ENCODE measurements at regions of chr15 and their contacts with region 1.

Region 1: DNA sequence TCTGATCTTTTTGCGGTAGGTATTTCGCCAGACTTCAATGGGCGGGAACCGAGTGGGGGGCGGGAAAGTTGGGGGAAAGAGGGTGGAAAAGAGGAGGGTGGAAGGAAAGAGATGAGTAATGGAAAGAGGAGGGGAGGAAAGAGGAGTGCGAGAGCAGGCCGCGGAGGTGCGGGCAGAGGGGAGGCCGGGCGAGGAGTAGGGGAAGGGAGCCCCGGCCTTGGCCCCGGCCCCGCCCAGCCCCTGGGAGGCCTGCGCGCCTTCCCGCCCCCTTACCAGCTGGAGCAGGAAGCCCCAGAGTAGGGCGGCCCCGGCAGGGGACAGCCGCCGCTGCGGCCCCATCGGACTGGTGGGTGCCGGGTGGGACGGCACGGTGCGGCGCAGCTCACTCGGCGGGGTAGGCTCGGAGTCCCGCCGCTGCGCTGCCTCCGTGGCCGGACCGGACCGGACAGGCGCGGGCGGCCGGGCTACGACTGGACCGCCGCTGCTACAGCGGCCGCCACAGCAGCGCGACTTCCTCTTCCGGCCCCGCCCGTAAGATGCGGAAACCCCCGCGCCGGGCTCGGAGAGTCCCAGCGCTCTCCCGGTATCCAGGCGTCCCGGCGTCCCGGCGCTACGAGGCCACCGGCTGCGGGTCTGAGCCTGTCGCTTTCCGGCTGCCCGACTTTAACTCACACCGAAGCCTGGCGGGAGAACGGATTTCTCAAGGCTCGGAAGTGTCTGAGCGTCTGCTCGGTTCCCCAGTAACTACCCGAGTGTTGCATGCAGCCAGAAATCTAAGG is at the start of gene SPPL2A:
- DNase-seq: peak; percentile 93
- H3K4me3 Mint-ChIP-seq: peak within 1 kb of the TSS; percentile 90
- H3K27ac Mint-ChIP-seq: peak within 1 kb of the TSS; percentile 99
- H3K4me1 Mint-ChIP-seq: peaks cover 55% of the 10 kb centered on the region
- H3K27me3 Mint-ChIP-seq: no peaks in the 10 kb centered on the region
- total RNA-seq, gene SPPL2A: 37.7 to 41.6 TPM

Region 2: GRCh38 chr15:49155110-49155833 is 1610.1 kb before region 1 on chr15 and contains the start of gene COPS2:
- CTCF ChIA-PET with region 1: no interaction called
- intact Hi-C with region 1: loop called (anchors 10 kb)
- DNase-seq: peak; percentile 97
- H3K4me3 Mint-ChIP-seq: peak within 1 kb of the TSS; percentile 98
- H3K27ac Mint-ChIP-seq: peak within 1 kb of the TSS; percentile 97
- H3K4me1 Mint-ChIP-seq: peaks cover 41% of the 10 kb centered on the region
- H3K27me3 Mint-ChIP-seq: no peaks in the 10 kb centered on the region
- total RNA-seq, gene COPS2: 79.7 to 86.4 TPM

Region 3: DNA sequence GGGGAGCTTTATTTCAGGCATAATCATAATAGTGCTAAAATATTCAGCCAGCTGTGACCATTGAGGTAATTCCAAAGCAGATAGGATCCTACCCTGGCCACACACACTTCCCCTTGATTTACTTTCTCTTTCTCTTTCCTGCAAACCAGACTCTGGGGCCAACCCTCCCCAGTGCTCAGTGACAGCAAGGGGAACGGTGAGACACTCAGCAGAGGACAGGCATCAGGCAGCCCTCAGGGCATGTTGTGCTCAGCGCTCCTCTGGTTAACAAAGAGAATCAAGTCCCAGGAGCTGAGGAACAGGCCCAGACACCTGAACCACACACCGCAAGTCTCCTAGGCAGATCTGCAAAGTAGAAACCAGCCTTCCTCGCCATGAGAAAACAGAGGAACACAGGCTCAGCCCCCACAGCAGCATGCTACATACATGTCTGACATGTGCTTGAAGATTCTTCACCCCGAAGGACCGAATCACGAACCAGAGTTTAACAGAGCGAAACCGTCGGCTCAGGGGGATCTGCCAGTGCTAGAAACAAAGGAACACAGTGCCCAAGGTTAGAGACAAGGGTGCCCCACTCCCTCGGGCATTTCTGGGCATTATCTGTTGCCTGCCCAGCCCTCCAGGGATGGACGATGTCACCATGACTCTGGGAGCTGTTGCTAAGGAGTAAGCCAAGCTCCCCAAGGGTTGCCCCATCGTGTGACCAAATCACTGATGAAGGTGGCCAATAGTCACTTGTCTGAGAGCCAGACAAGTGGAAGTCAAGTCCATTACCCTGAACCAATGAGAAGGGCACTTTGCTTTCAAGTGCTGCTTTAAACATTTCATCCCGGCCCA is 517.3 kb before region 1 on chr15:
- CTCF ChIA-PET with region 1: no interaction called
- intact Hi-C with region 1: loop called (anchors 2 kb)
- DNase-seq: peak; percentile 88
- H3K4me3 Mint-ChIP-seq: peak overlapping the region; percentile 81
- H3K27ac Mint-ChIP-seq: peak overlapping the region; percentile 99
- H3K4me1 Mint-ChIP-seq: peaks cover 42% of the 10 kb centered on the region
- H3K27me3 Mint-ChIP-seq: no peaks in the 10 kb centered on the region

Region 4: DNA sequence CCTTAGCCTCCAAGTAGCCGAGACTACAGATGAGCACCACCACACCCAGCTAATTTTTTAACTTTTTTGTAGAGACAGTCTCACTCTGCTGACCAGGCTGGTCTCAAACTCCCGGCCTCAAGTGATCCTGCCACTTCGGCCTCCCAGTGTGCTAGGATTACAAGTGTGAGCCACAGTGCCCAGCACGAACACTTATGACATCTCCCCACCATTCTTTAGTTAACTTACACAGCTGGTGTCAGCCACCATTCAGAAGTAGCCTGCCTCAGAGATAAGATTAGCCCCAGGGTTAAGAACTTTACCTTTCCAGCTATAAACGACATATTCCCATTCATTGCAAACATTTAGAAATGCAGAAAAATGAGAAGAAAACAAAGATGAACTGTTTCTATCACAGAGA is 137.0 kb before region 1 on chr15:
- CTCF ChIA-PET with region 1: no interaction called
- intact Hi-C with region 1: no loop called
- DNase-seq: no peak
- H3K4me3 Mint-ChIP-seq: no peak overlapping the region
- H3K27ac Mint-ChIP-seq: no peak overlapping the region
- H3K4me1 Mint-ChIP-seq: peaks cover 14% of the 10 kb centered on the region
- H3K27me3 Mint-ChIP-seq: no peaks in the 10 kb centered on the region

Region 5: DNA sequence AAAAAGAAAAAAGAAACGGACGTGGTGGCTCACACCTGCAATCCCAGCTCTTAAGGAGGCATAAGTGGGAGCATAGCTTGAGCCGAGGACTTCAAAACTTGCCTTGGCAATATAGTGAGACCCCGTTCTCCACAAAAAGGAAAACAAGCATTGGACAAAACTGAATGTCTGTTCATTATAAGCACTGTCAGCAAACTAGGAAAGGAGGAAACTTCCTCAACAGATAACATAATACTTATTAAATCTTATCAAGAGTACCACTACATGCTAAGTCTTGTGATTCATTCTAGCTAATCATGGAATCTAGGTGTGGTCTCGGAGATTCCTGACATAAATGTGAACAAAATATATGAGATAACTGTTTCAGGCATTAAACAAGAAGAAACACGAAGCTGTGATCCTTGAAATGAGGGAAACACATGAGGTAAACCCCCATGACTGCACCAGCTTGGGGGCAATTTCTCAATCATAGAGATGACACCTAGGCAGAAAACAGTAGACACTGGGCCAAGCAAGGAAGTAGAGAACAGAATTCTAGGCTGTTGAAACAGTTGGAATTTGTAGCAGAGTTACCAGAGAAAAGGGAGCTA is 112.1 kb before region 1 on chr15:
- CTCF ChIA-PET with region 1: no interaction called
- intact Hi-C with region 1: loop called (anchors 1 kb)
- DNase-seq: no peak
- H3K4me3 Mint-ChIP-seq: no peak overlapping the region
- H3K27ac Mint-ChIP-seq: peak overlapping the region; percentile 47
- H3K4me1 Mint-ChIP-seq: peaks cover 19% of the 10 kb centered on the region
- H3K27me3 Mint-ChIP-seq: no peaks in the 10 kb centered on the region

Region 6: GRCh38 chr15:50735156-50735555 is 30.2 kb before region 1 on chr15:
- CTCF ChIA-PET with region 1: no interaction called
- intact Hi-C with region 1: no loop called
- DNase-seq: no peak
- H3K4me3 Mint-ChIP-seq: no peak overlapping the region
- H3K27ac Mint-ChIP-seq: no peak overlapping the region
- H3K4me1 Mint-ChIP-seq: no peaks in the 10 kb centered on the region
- H3K27me3 Mint-ChIP-seq: no peaks in the 10 kb centered on the region

Region 7: DNA sequence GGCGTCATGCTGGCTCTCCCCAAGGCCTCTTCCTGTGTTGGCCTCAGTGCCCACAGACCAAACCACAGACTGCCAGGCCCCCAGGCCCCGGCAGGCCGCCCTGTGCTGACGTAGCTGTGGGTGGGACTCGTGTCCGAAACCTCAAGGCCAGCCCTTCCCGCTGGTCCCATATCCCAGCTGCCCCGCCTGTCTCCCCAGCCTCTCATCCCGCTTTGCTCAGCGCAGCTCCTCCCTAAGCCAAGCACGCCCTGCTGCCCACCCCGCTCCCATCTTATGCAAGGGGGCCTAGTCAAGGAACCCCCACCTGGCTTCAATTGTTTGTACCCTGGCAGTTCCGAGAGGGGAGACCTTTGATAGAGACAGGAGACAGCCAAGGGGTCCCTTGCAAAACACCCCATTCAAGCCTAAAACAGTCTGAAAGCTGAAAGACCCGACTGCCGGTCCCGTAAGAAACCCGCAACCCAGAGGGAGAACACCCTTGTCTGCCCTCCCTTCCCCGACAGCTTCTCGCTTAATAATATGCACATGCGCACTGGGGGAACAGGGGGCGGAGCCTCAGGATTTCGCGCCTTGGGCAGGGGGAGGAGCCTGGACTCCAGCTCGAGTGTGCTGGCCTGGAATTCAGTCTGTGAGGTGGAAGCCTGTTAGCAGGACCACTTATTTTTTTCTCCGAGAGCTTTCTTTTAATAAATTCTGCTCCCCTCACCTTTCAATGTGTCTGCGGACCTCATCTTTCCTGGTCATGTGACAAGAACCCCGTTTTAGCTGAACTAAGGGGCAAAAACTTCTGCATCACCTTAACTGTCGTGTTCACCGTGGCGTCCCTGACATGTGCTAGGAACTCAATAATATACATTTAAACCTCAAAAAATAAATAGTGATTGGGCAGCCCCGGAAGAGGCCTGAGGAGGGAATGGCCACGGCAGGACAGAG is 312.1 kb after region 1 on chr15:
- CTCF ChIA-PET with region 1: no interaction called
- intact Hi-C with region 1: loop called (anchors 5 kb)
- DNase-seq: peak; percentile 91
- H3K4me3 Mint-ChIP-seq: peak overlapping the region; percentile 68
- H3K27ac Mint-ChIP-seq: peak overlapping the region; percentile 85
- H3K4me1 Mint-ChIP-seq: peaks cover 24% of the 10 kb centered on the region
- H3K27me3 Mint-ChIP-seq: peaks cover 8% of the 10 kb centered on the region

Measured in activated naive CD4-positive, alpha-beta T cell treated with anti-CD3 and anti-CD28 coated beads for 36 hours (primary cell).